PC-9 (cell line): ENCODE measurements at regions of chr3 and their contacts with region 1.

Region 1: GRCh38 chr3:15064835-15065549 is at the start of gene MRPS25:
- DNase-seq: peak; percentile 81 to 88
- H3K4me3 ChIP-seq: peak within 1 kb of the TSS; percentile 97
- H3K27ac ChIP-seq: 0 out of 2 replicates have a peak within 1 kb of the TSS, but pooled peaks have one; percentile 36
- H3K4me1 ChIP-seq: peaks cover 18% of the 10 kb centered on the region
- H3K27me3 ChIP-seq: no peaks in the 10 kb centered on the region
- CTCF ChIP-seq: no peak
- total RNA-seq, gene MRPS25: 47.8 and 53.3 TPM in 2 replicates

Region 2: GRCh38 chr3:14947886-14948555 is 117.0 kb before region 1 on chr3:
- CTCF ChIA-PET with region 1: no interaction called
- POLR2A ChIA-PET with region 1: no interaction called
- intact Hi-C with region 1: loop called (anchors 5 kb)
- DNase-seq: peak; percentile 80 to 96
- H3K4me3 ChIP-seq: peak overlapping the region; percentile 99
- H3K27ac ChIP-seq: peak overlapping the region; percentile 97
- H3K4me1 ChIP-seq: peaks cover 20% of the 10 kb centered on the region; the same call in 1 of the 2 replicates
- H3K27me3 ChIP-seq: no peaks in the 10 kb centered on the region
- CTCF ChIP-seq: no peak

Region 3: GRCh38 chr3:15332405-15333098 is 267.6 kb after region 1 on chr3 and contains the start of gene SH3BP5:
- CTCF ChIA-PET with region 1: no interaction called
- POLR2A ChIA-PET with region 1: no interaction called
- intact Hi-C with region 1: no loop called
- DNase-seq: peak; percentile 36 to 76
- H3K4me3 ChIP-seq: peak within 1 kb of the TSS; percentile 95
- H3K27ac ChIP-seq: peak within 1 kb of the TSS; percentile 43; the same call in 1 of the 2 replicates
- H3K4me1 ChIP-seq: peaks cover 68% of the 10 kb centered on the region
- H3K27me3 ChIP-seq: no peaks in the 10 kb centered on the region
- CTCF ChIP-seq: peak; percentile 69
- total RNA-seq, gene SH3BP5: 31.6 and 39.3 TPM in 2 replicates